Transverse colon (tissue), 4 donors: ENCODE measurements at regions of chr7 and their contacts with region 1.

Region 1: DNA sequence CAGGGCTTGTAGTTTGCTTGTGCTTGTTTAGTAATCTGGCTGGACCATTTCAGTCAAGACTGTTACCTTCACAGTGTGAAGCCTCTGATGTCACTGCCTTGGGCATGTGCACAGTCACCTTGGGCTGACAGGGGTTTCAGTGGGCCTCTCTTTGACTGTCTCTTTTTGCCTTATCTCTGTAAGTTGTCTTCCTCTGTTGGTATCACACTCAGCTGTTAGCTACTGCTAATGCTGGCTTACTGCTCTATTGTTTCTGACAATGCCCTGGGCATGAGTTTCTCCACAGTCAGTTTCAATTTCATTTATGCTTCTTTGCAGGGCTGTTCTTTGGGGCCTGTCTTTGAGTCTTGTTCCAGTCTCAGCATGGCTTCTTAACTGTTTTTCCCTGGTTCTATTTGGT is 201.9 kb upstream of the SHH start:
- DNase-seq: no peak
- H3K4me3 ChIP-seq: no peak overlapping the region
- H3K27ac ChIP-seq: no peak overlapping the region
- H3K4me1 ChIP-seq: no peaks in the 10 kb centered on the region
- H3K27me3 ChIP-seq: no peaks in the 10 kb centered on the region
- CTCF ChIP-seq: no peak
- EP300 ChIP-seq: no peak
- POLR2A ChIP-seq: no peak

Region 2: GRCh38 chr7:155619634-155620271 is 394.4 kb before region 1 on chr7:
- in situ Hi-C with region 1: no loop called
- intact Hi-C with region 1: loop called (anchors 10 kb)
- DNase-seq: no peak
- H3K4me3 ChIP-seq: no peak overlapping the region
- H3K27ac ChIP-seq: peak overlapping the region; percentile 79 to 86 (median 84)
- H3K4me1 ChIP-seq: peaks cover 3 to 13% (median 9%) of the 10 kb centered on the region in 4 donors
- H3K27me3 ChIP-seq: no peaks in the 10 kb centered on the region
- CTCF ChIP-seq: no peak
- EP300 ChIP-seq: no peak
- POLR2A ChIP-seq: no peak

Region 3: GRCh38 chr7:155685070-155685790 is 329.0 kb before region 1 on chr7:
- in situ Hi-C with region 1: no loop called
- intact Hi-C with region 1: no loop called
- DNase-seq: no peak
- H3K4me3 ChIP-seq: no peak overlapping the region
- H3K27ac ChIP-seq: no peak overlapping the region
- H3K4me1 ChIP-seq: peaks cover 0 to 8% (median 0%) of the 10 kb centered on the region in 4 donors
- H3K27me3 ChIP-seq: no peaks in the 10 kb centered on the region
- CTCF ChIP-seq: no peak
- EP300 ChIP-seq: no peak
- POLR2A ChIP-seq: no peak